ENCODE measurements at regions of chr3 and their contacts with region 1.

Region 1: DNA sequence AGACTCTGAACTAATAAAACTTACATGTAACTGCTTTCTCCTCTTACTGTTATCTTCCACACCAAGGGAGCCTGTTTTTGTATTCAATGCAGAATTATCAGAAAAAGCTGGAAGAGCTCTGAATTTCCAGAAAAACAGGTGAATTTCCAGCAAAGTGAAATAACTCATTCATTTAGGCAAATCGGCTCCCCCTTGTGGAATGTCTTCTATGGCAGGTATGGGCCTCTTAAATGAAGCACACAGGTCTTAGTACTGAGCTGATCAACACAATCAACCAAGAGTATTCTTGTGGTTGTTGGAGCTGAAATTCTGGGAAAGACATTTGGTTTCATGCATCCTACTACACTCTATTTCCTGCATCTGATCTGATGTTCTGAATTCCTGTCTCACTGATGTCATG is 31.0 kb upstream of the PTPRG start:
- DNase-seq: no peak
- ATAC-seq: peak in 1 of 2 donors; percentile 53
- H3K4me3 ChIP-seq: no peak overlapping the region
- H3K27ac ChIP-seq: no peak overlapping the region
- H3K4me1 ChIP-seq: no peaks in the 10 kb centered on the region
- H3K27me3 ChIP-seq: no peaks in the 10 kb centered on the region
- CTCF ChIP-seq: peak in 4 of 5 experiments; percentile 32 to 63 (median 45)
- POLR2A ChIP-seq: no peak

Region 2: GRCh38 chr3:61168301-61168700 is 362.1 kb before region 1 on chr3:
- in situ Hi-C with region 1: no loop called
- intact Hi-C with region 1: no loop called
- DNase-seq: no peak
- ATAC-seq: no peak
- H3K4me3 ChIP-seq: no peak overlapping the region
- H3K27ac ChIP-seq: no peak overlapping the region
- H3K4me1 ChIP-seq: no peaks in the 10 kb centered on the region
- H3K27me3 ChIP-seq: no peaks in the 10 kb centered on the region
- CTCF ChIP-seq: no peak
- POLR2A ChIP-seq: no peak

Region 3: GRCh38 chr3:61251174-61251972 is 279.0 kb before region 1 on chr3 and contains the start of gene FHIT:
- in situ Hi-C with region 1: loop called in 1 of 4 experiments (anchors 25 kb)
- intact Hi-C with region 1: no loop called
- DNase-seq: peak; percentile 96 to 97
- ATAC-seq: peak; percentile 94 to 95
- H3K4me3 ChIP-seq: peak within 1 kb of the TSS; percentile 75 to 97 (median 84)
- H3K27ac ChIP-seq: peak within 1 kb of the TSS; percentile 86 to 96 (median 86)
- H3K4me1 ChIP-seq: peaks cover 10 to 17% of the 10 kb centered on the region in 2 donors
- H3K27me3 ChIP-seq: no peaks in the 10 kb centered on the region
- CTCF ChIP-seq: no peak
- POLR2A ChIP-seq: peak; percentile 49 to 66
- total RNA-seq, gene FHIT: 0.72 to 5.2 (median 2.1) TPM

Region 4: DNA sequence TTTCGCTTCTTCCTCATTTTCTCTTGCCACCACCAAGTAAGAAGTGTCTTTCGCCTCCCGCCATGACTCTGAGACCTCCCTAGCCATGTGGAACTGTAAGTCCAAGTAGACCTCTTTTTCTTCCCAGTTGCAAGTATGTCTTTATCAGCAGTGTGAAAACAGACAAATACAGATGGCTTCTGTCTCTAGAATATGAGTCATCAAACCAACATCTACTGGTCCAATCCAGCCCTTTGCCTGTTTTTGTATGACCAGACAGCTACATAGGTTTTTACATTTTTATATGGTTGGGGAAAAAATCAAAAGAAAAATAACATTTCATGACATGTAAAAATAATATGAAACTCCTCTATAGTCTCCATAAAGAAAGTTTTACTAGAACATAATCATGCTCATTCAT is 87.7 kb before region 1 on chr3:
- in situ Hi-C with region 1: no loop called
- intact Hi-C with region 1: loop called (anchors 5 kb)
- DNase-seq: no peak
- ATAC-seq: no peak
- H3K4me3 ChIP-seq: no peak overlapping the region
- H3K27ac ChIP-seq: no peak overlapping the region
- H3K4me1 ChIP-seq: peaks cover 22 to 33% of the 10 kb centered on the region in 2 donors
- H3K27me3 ChIP-seq: no peaks in the 10 kb centered on the region
- CTCF ChIP-seq: no peak
- POLR2A ChIP-seq: no peak